ENCODE measurements at regions of chr2 and their contacts with region 1.

Region 1: GRCh38 chr2:142989273-142990204 is 112.1 kb downstream of the KYNU start:
- DNase-seq: peak; percentile 43
- H3K4me3 ChIP-seq: no peak overlapping the region
- H3K27ac ChIP-seq: no peak overlapping the region
- H3K4me1 ChIP-seq: no peaks in the 10 kb centered on the region
- CTCF ChIP-seq: peak; percentile 86

Region 2: GRCh38 chr2:142682528-142682927 is 307.0 kb before region 1 on chr2:
- CTCF ChIA-PET with region 1: no interaction called
- POLR2A ChIA-PET with region 1: interaction called, 3 read pairs
- intact Hi-C with region 1: loop called (anchors 10 kb)
- DNase-seq: no peak
- H3K4me3 ChIP-seq: no peak overlapping the region
- H3K27ac ChIP-seq: no peak overlapping the region
- H3K4me1 ChIP-seq: no peaks in the 10 kb centered on the region
- CTCF ChIP-seq: peak; percentile 41; the same call in 1 of the 2 replicates

Region 3: GRCh38 chr2:143505542-143505941 is 516.0 kb after region 1 on chr2:
- CTCF ChIA-PET with region 1: no interaction called
- POLR2A ChIA-PET with region 1: no interaction called
- intact Hi-C with region 1: no loop called
- DNase-seq: no peak
- H3K4me3 ChIP-seq: no peak overlapping the region
- H3K27ac ChIP-seq: no peak overlapping the region
- H3K4me1 ChIP-seq: no peaks in the 10 kb centered on the region
- CTCF ChIP-seq: no peak

Measured in OCI-LY7 (cell line).